PC-3 (cell line): ENCODE measurements at regions of chr12 and their contacts with region 1.

Region 1: DNA sequence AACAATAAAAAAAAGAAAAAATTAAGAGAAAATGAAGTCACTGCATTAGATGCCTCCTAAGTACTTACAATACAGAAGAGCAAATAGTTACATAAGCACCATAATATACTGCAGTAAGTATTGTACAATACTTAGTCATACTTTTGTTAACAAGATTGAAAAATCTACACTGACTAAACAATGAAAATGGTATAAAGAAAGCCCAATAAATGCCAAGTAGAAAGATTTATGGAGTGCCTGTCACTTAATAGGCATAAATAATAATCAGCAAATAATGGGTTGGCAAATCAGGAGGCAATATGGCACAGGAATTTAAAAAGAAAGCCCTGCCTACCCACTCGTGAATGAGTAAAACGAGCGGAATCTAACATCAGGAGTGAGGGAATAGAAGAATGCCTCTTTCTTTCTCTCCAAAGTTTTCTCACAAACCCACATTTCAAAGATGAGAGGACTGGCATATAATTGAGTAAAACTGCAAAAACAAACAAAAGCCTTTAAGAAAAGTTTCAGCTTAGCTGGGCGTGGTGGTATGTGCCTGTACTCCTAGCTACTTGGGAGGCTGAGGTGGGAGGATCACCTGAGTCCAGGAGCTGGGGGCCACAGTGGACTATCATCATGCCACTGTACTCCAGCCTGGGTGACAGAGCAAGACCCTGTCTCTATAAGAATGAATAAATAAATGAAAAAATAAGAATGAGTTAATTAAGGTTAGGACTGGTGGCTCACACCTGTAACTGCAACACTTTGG is 36.1 kb downstream of the CRY1 start:
- DNase-seq: peak; percentile 95
- ATAC-seq: peak; percentile 97
- H3K4me3 ChIP-seq: no peak overlapping the region
- H3K27ac ChIP-seq: peak overlapping the region; percentile 64
- H3K4me1 ChIP-seq: peaks cover 7% of the 10 kb centered on the region
- H3K27me3 ChIP-seq: no peaks in the 10 kb centered on the region
- CTCF ChIP-seq: no peak; the same call in 1 of the 2 replicates

Region 2: GRCh38 chr12:106955377-106956047 is 101.7 kb before region 1 on chr12 and contains the start of gene TMEM263:
- CTCF ChIA-PET with region 1: no interaction called
- POLR2A ChIA-PET with region 1: no interaction called
- intact Hi-C with region 1: loop called (anchors 1 kb)
- DNase-seq: peak; percentile 94
- ATAC-seq: peak; percentile 77
- H3K4me3 ChIP-seq: peak within 1 kb of the TSS; percentile 80
- H3K27ac ChIP-seq: peak within 1 kb of the TSS; percentile 32
- H3K4me1 ChIP-seq: peaks cover 20% of the 10 kb centered on the region
- H3K27me3 ChIP-seq: no peaks in the 10 kb centered on the region
- CTCF ChIP-seq: 0 out of 2 replicates have a peak, but pooled peaks have one; percentile 23
- total RNA-seq, gene TMEM263: 42.7 and 59.7 TPM in 2 replicates

Region 3: GRCh38 chr12:106986625-106987430 is 70.4 kb before region 1 on chr12 and contains the start of gene MTERF2:
- CTCF ChIA-PET with region 1: no interaction called
- POLR2A ChIA-PET with region 1: no interaction called
- intact Hi-C with region 1: loop called (anchors 1 kb)
- DNase-seq: peak; percentile 96
- ATAC-seq: peak; percentile 89
- H3K4me3 ChIP-seq: peak within 1 kb of the TSS; percentile 86
- H3K27ac ChIP-seq: 0 out of 2 replicates have a peak within 1 kb of the TSS, but pooled peaks have one; percentile 16
- H3K4me1 ChIP-seq: peaks cover 26% of the 10 kb centered on the region
- H3K27me3 ChIP-seq: no peaks in the 10 kb centered on the region
- CTCF ChIP-seq: no peak
- total RNA-seq, gene MTERF2: 10.7 and 14.2 TPM in 2 replicates

Region 4: DNA sequence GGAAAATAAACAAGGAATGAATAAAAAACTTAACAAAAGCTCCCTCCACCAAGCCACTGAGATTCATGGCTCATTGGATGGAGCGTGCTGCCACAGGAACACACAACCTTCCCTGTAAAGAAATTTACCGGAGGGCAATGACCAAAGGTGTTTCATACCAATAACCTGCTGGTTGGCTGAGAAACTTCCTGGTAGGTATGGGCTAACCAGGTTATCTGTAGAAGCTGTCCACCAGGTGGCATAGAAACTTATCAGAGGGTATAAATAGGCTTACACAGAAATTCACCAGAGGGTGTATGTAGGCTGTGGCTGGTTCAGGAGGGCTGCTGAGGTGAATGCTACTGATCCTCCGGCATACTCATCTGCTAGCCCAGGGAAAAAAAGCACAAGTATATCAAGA is 43.2 kb before region 1 on chr12:
- CTCF ChIA-PET with region 1: interaction called, 3 read pairs
- POLR2A ChIA-PET with region 1: no interaction called
- intact Hi-C with region 1: loop called (anchors 5 kb)
- DNase-seq: peak; percentile 92
- ATAC-seq: peak; percentile 100
- H3K4me3 ChIP-seq: no peak overlapping the region
- H3K27ac ChIP-seq: no peak overlapping the region
- H3K4me1 ChIP-seq: no peaks in the 10 kb centered on the region
- H3K27me3 ChIP-seq: no peaks in the 10 kb centered on the region
- CTCF ChIP-seq: peak; percentile 81

Region 5: GRCh38 chr12:107027636-107028053 is 29.6 kb before region 1 on chr12:
- CTCF ChIA-PET with region 1: no interaction called
- POLR2A ChIA-PET with region 1: no interaction called
- intact Hi-C with region 1: loop called (anchors 1 kb)
- DNase-seq: peak; percentile 98
- ATAC-seq: peak; percentile 97
- H3K4me3 ChIP-seq: no peak overlapping the region
- H3K27ac ChIP-seq: peak overlapping the region; percentile 52
- H3K4me1 ChIP-seq: peaks cover 29% of the 10 kb centered on the region
- H3K27me3 ChIP-seq: no peaks in the 10 kb centered on the region
- CTCF ChIP-seq: no peak

Region 6: DNA sequence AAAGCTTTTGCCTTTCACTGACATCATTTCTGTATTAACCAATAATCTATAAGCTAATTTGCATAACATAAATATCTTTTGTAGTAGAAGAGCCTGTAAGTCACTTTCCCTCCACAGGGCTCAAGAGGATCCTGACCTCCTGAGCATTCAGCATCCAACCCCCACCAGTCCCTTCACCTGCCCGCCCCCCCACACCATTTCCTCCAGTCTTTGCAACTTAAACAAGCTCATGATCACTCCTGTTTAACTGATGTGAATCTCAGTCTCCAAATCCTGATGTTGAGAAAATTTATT is 48.1 kb after region 1 on chr12:
- CTCF ChIA-PET with region 1: no interaction called
- POLR2A ChIA-PET with region 1: no interaction called
- intact Hi-C with region 1: loop called (anchors 1 kb)
- DNase-seq: no peak
- ATAC-seq: peak; percentile 23
- H3K4me3 ChIP-seq: no peak overlapping the region
- H3K27ac ChIP-seq: no peak overlapping the region
- H3K4me1 ChIP-seq: peaks cover 7% of the 10 kb centered on the region; the same call in 1 of the 2 replicates
- H3K27me3 ChIP-seq: no peaks in the 10 kb centered on the region
- CTCF ChIP-seq: no peak